Naive thymus-derived CD4-positive, alpha-beta T cell (primary cell): ENCODE measurements at regions of chr16 and their contacts with region 1.

Region 1: GRCh38 chr16:58578642-58579041 is 51.0 kb downstream of the CNOT1 start:
- DNase-seq: no peak
- ATAC-seq: no peak
- H3K4me3 ChIP-seq: no peak overlapping the region
- H3K4me3 Mint-ChIP-seq: no peak overlapping the region
- H3K27ac ChIP-seq: no peak overlapping the region
- H3K27ac Mint-ChIP-seq: peak overlapping the region in 1 of 9 donors; percentile 43
- H3K4me1 ChIP-seq: no peaks in the 10 kb centered on the region
- H3K4me1 Mint-ChIP-seq: no peaks in the 10 kb centered on the region
- H3K27me3 ChIP-seq: no peaks in the 10 kb centered on the region
- H3K27me3 Mint-ChIP-seq: no peaks in the 10 kb centered on the region

Region 2: DNA sequence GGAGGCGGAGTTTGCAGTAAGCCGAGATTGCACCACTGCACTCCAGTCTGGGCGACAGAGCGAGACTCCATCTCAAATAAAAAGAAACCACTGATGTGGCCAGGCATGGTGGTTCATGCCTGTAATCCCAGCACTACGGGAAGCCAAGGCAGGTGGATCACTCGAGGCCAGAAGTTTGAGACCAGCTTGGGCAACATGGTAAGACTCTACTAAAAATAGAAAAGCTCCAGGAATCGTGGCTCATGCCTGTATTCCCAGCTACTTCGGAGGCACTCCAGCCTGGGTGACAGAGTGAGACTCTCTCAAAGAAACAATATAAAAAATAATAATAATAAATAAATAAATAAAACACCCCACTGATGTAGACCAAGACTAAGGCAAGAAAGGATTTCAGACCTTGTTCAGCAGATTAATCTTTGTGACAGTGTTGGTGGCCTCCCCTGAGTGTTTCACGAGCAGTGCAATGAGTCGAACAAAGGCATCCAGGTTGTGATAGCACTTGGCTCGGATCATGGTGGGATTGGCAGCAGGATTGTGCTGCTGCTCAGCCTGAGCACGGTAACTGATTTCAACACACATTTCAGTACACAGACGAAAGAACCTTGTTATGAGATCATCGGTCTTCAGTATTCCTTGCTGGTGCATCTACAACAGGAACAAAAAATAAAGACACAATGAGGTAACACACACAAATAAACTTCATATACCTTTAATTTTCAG is 44.7 kb before region 1 on chr16:
- CTCF ChIA-PET with region 1: no interaction called
- POLR2A ChIA-PET with region 1: no interaction called
- intact Hi-C with region 1: loop called in 1 of 2 experiments (anchors 5 kb)
- DNase-seq: no peak
- ATAC-seq: no peak
- H3K4me3 ChIP-seq: no peak overlapping the region
- H3K4me3 Mint-ChIP-seq: no peak overlapping the region
- H3K27ac ChIP-seq: no peak overlapping the region
- H3K27ac Mint-ChIP-seq: peak overlapping the region in 1 of 9 donors; percentile 65
- H3K4me1 ChIP-seq: no peaks in the 10 kb centered on the region
- H3K4me1 Mint-ChIP-seq: peaks cover 0 to 5% (median 0%) of the 10 kb centered on the region in 7 donors
- H3K27me3 ChIP-seq: no peaks in the 10 kb centered on the region
- H3K27me3 Mint-ChIP-seq: no peaks in the 10 kb centered on the region

Region 3: GRCh38 chr16:58541711-58542110 is 36.9 kb before region 1 on chr16:
- CTCF ChIA-PET with region 1: no interaction called
- POLR2A ChIA-PET with region 1: no interaction called
- intact Hi-C with region 1: loop called in 1 of 2 experiments (anchors 5 kb)
- DNase-seq: no peak
- ATAC-seq: no peak
- H3K4me3 ChIP-seq: no peak overlapping the region
- H3K4me3 Mint-ChIP-seq: no peak overlapping the region
- H3K27ac ChIP-seq: no peak overlapping the region
- H3K27ac Mint-ChIP-seq: no peak overlapping the region
- H3K4me1 ChIP-seq: no peaks in the 10 kb centered on the region
- H3K4me1 Mint-ChIP-seq: peaks cover 0 to 13% (median 4%) of the 10 kb centered on the region in 7 donors
- H3K27me3 ChIP-seq: no peaks in the 10 kb centered on the region
- H3K27me3 Mint-ChIP-seq: no peaks in the 10 kb centered on the region

Region 4: GRCh38 chr16:58605562-58605961 is 26.9 kb after region 1 on chr16:
- CTCF ChIA-PET with region 1: no interaction called
- POLR2A ChIA-PET with region 1: no interaction called
- intact Hi-C with region 1: no loop called
- DNase-seq: no peak
- ATAC-seq: no peak
- H3K4me3 ChIP-seq: no peak overlapping the region
- H3K4me3 Mint-ChIP-seq: no peak overlapping the region
- H3K27ac ChIP-seq: no peak overlapping the region
- H3K27ac Mint-ChIP-seq: no peak overlapping the region
- H3K4me1 ChIP-seq: peaks cover 4% of the 10 kb centered on the region in 2 donors
- H3K4me1 Mint-ChIP-seq: peaks cover 27 to 54% (median 47%) of the 10 kb centered on the region in 7 donors
- H3K27me3 ChIP-seq: no peaks in the 10 kb centered on the region
- H3K27me3 Mint-ChIP-seq: no peaks in the 10 kb centered on the region